HepG2 (cell line): ENCODE measurements at regions of chr16 and their contacts with region 1.

Region 1: GRCh38 chr16:70251629-70252354 is at the start of gene EXOSC6:
- DNase-seq: peak; percentile 92
- ATAC-seq: peak; percentile 88
- H3K4me3 ChIP-seq: peak within 1 kb of the TSS; percentile 69 to 83 (median 81)
- H3K27ac ChIP-seq: peak within 1 kb of the TSS; percentile 90
- H3K4me1 ChIP-seq: peaks cover 49% of the 10 kb centered on the region
- H3K27me3 ChIP-seq: no peaks in the 10 kb centered on the region
- CTCF ChIP-seq: peak; percentile 99
- EP300 ChIP-seq: peak; percentile 55 to 59
- POLR2A ChIP-seq: peak; percentile 93 to 95
- RAD21 ChIP-seq: peak; percentile 69
- total RNA-seq, gene EXOSC6: 37.3 and 39.9 TPM in 2 replicates

Region 2: DNA sequence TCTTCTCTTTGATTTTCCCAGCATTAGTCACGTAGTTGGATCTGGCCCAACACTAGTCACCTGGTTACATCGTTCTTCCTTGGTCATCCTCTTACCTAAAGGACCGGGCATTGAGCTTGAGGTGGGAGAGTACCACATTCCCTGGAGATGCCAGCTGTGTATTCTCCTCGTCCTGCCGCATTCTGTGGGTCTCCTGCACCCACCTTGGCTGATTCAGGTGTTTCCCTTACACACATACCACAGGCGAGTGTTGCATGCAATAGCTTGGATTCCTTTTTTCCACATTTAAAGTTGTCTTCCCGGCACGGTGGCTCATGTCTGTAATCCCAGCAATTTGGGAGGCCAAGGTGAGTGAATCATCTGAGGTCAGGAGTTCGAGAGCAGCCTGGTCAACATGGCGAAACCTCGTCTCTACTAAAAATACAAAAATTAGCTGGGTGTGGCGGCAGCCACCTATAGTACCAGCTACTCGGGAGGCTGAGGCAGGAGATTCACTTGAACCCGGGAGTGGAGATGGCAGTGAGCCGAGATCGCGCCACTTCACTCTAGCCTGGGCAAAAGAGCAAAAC is 99.8 kb before region 1 on chr16:
- CTCF ChIA-PET with region 1: no interaction called
- POLR2A ChIA-PET with region 1: interaction called, 17 read pairs
- in situ Hi-C with region 1: no loop called
- intact Hi-C with region 1: loop called (anchors 5 kb)
- DNase-seq: no peak
- ATAC-seq: peak; percentile 5; the same call in 1 of the 3 replicates
- H3K4me3 ChIP-seq: peak overlapping the region in 1 of 3 experiments; percentile 57; a peak in 1 of 6 replicates
- H3K27ac ChIP-seq: peak overlapping the region; percentile 84
- H3K4me1 ChIP-seq: peaks cover 37% of the 10 kb centered on the region
- H3K27me3 ChIP-seq: no peaks in the 10 kb centered on the region
- CTCF ChIP-seq: no peak
- EP300 ChIP-seq: no peak
- POLR2A ChIP-seq: no peak
- RAD21 ChIP-seq: no peak

Region 3: GRCh38 chr16:70162041-70162451 is 89.7 kb before region 1 on chr16:
- CTCF ChIA-PET with region 1: interaction called, 4 read pairs
- POLR2A ChIA-PET with region 1: interaction called, 7 read pairs
- in situ Hi-C with region 1: loop called (anchors 10 kb)
- intact Hi-C with region 1: no loop called
- DNase-seq: peak; percentile 77
- ATAC-seq: peak; percentile 1; the same call in 1 of the 3 replicates
- H3K4me3 ChIP-seq: no peak overlapping the region
- H3K27ac ChIP-seq: peak overlapping the region; percentile 24
- H3K4me1 ChIP-seq: peaks cover 61% of the 10 kb centered on the region
- H3K27me3 ChIP-seq: no peaks in the 10 kb centered on the region
- CTCF ChIP-seq: no peak
- EP300 ChIP-seq: no peak
- POLR2A ChIP-seq: peak in 1 of 2 experiments; percentile 25; a peak in 1 of 4 replicates
- RAD21 ChIP-seq: no peak

Region 4: DNA sequence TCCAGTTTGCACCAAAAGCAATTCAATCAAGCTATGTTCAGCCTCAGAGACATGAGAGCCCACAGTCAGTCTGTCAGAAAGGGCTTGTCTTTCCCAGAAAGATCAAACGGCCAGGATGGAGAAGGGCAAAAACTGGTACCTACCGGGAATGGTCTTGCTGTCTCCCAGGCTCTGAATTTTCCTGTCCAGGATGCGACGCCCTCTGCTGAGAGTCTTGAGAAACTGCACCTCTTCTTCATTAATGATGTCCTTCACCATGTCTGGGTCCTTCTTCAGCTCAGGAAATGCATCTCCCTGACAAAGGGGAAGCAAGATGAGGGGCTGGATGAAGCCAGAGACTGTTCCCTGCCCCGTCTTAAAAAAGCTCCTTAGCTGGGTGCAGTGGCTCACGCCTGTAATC is 15.7 kb after region 1 on chr16:
- CTCF ChIA-PET with region 1: interaction called, 5 read pairs
- POLR2A ChIA-PET with region 1: interaction called, 10 read pairs
- in situ Hi-C with region 1: no loop called
- intact Hi-C with region 1: loop called (anchors 1 kb)
- DNase-seq: peak; percentile 72
- ATAC-seq: peak; percentile 80
- H3K4me3 ChIP-seq: no peak overlapping the region
- H3K27ac ChIP-seq: no peak overlapping the region
- H3K4me1 ChIP-seq: no peaks in the 10 kb centered on the region
- H3K27me3 ChIP-seq: no peaks in the 10 kb centered on the region
- CTCF ChIP-seq: peak; percentile 85
- EP300 ChIP-seq: no peak
- POLR2A ChIP-seq: no peak
- RAD21 ChIP-seq: peak; percentile 58; the same call in 1 of the 2 replicates

Region 5: DNA sequence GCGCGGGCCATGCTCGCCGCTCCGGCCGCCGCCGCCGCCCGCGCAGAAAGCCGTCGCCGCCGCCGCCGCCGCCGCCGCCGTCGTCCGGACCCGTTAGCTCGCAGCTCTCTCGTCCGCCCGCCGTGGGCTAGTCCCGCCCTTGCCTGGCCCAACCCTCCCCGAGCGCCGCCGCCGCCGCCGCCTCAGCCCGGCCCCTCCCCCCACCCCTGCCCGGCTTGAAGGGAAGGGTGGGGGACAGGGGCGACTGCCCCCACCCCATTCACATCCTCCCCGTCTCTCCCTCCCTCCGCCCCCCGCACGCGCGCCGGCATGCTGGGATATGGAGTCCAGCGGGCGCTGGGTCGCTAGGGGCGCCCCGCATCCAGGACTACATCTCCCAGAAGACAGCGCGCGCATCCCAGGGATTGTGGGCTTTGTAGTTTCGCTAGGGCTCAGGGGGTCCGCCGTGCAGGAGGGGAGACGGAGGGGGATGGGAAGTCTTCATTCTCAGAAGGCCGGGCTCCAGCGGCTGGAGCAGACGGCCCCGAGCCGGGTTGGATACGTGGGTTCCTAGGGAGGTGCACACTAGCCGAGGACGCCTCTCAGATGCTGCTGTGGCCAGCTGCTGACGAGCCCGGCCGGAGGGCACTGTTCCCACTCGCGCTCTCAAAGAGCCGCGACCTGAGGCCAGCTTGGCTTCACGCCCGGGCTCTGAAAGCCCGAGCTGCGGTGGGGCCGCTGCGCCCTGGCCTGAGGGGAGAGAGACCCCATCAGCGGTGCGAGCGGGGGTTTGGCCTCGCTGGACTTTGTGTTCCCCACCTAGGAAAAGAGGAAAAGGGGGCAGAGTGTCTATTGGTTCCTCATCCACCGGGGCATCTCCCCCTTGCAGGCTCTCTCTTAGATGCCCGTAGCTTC is 187.4 kb after region 1 on chr16 and contains the start of gene ST3GAL2:
- CTCF ChIA-PET with region 1: no interaction called
- POLR2A ChIA-PET with region 1: no interaction called
- in situ Hi-C with region 1: no loop called
- intact Hi-C with region 1: no loop called
- DNase-seq: peak; percentile 93
- ATAC-seq: peak; percentile 88
- H3K4me3 ChIP-seq: peak within 1 kb of the TSS; percentile 82 to 92 (median 89)
- H3K27ac ChIP-seq: peak within 1 kb of the TSS; percentile 69
- H3K4me1 ChIP-seq: peaks cover 66% of the 10 kb centered on the region
- H3K27me3 ChIP-seq: no peaks in the 10 kb centered on the region; a peak in 1 of 5 replicates
- CTCF ChIP-seq: peak; percentile 27
- EP300 ChIP-seq: peak in 1 of 2 experiments; percentile 54; a peak in 2 of 4 replicates
- POLR2A ChIP-seq: peak; percentile 56 to 72; a peak in 3 of 4 replicates
- RAD21 ChIP-seq: peak; percentile 51
- total RNA-seq, gene ST3GAL2: 17.8 and 24.9 TPM in 2 replicates